ENCODE measurements at regions of chr14 and their contacts with region 1.

Region 1: GRCh38 chr14:32576088-32576795 is 247.1 kb downstream of the AKAP6 start:
- DNase-seq: peak; percentile 35
- H3K4me3 Mint-ChIP-seq: no peak overlapping the region
- H3K27ac Mint-ChIP-seq: no peak overlapping the region
- H3K4me1 Mint-ChIP-seq: no peaks in the 10 kb centered on the region
- H3K27me3 Mint-ChIP-seq: no peaks in the 10 kb centered on the region

Region 2: GRCh38 chr14:32560209-32560857 is 15.9 kb before region 1 on chr14:
- CTCF ChIA-PET with region 1: interaction called, 11 read pairs
- POLR2A ChIA-PET with region 1: no interaction called
- intact Hi-C with region 1: no loop called
- DNase-seq: peak; percentile 40
- H3K4me3 Mint-ChIP-seq: no peak overlapping the region
- H3K27ac Mint-ChIP-seq: no peak overlapping the region
- H3K4me1 Mint-ChIP-seq: peaks cover 12% of the 10 kb centered on the region
- H3K27me3 Mint-ChIP-seq: no peaks in the 10 kb centered on the region

Region 3: DNA sequence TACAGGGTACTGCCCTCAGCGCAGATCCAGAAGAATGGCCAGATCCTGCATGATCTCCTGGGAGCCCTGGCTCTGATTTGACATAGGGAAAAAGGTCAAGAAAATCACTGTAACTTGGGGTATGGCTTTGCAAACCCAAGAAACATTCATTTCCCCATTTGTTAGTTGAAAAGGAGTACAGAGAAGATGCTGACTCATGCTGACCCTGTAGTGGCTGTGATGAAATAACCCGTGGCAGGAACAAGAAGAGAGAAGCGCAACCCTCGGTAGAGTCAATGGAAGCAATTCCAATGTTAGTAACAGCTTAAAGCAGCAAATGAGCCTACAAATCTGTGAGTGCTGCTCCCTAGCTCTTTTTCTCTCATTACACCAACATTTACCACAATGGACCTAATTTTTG is 80.8 kb after region 1 on chr14:
- CTCF ChIA-PET with region 1: no interaction called
- POLR2A ChIA-PET with region 1: no interaction called
- intact Hi-C with region 1: no loop called
- DNase-seq: no peak
- H3K4me3 Mint-ChIP-seq: no peak overlapping the region
- H3K27ac Mint-ChIP-seq: no peak overlapping the region
- H3K4me1 Mint-ChIP-seq: no peaks in the 10 kb centered on the region
- H3K27me3 Mint-ChIP-seq: no peaks in the 10 kb centered on the region

Region 4: DNA sequence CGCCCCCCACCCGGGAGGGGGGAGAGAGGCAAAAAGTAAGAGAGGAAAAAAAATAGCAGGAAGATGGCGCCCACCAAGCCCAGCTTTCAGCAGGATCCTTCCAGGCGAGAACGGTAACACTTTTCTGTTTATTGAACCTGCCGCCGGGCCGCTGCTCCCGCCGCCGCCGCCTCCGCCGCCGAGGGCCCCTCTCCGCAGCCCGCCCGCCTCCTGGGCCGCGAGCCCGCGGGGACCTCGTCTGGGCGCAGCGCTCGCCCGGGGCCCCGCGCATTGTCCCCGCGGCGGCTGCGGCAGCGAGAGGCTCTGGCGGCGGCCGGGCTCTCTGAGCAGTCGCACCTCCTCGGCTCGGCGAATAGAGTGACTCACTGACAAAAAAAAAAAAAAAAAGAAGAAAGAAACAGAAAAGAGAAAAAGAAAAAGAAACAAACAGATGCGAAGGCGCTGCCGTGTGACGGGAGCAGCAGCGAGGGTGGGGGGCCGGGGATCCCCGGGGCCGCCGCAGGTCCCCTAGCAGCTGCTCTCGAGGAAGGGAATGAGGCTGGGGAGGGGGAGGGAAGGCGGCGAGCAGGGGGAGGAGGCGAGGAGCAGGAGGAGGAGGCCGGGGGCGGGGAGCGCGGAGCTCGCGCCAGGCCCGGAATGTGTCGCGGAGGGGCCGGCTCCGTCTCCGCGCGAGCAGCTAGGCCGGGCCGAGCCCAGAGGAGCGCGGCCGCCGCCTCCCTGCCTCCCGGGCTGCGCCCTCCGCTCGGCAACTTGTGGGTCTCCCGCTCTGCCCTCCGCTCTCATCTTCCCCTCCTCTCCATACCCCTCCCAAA is 363.2 kb after region 1 on chr14:
- CTCF ChIA-PET with region 1: no interaction called
- POLR2A ChIA-PET with region 1: no interaction called
- intact Hi-C with region 1: loop called (anchors 10 kb)
- DNase-seq: peak; percentile 39
- H3K4me3 Mint-ChIP-seq: peak overlapping the region; percentile 71
- H3K27ac Mint-ChIP-seq: no peak overlapping the region
- H3K4me1 Mint-ChIP-seq: peaks cover 10% of the 10 kb centered on the region
- H3K27me3 Mint-ChIP-seq: peaks cover 55% of the 10 kb centered on the region

Region 5: DNA sequence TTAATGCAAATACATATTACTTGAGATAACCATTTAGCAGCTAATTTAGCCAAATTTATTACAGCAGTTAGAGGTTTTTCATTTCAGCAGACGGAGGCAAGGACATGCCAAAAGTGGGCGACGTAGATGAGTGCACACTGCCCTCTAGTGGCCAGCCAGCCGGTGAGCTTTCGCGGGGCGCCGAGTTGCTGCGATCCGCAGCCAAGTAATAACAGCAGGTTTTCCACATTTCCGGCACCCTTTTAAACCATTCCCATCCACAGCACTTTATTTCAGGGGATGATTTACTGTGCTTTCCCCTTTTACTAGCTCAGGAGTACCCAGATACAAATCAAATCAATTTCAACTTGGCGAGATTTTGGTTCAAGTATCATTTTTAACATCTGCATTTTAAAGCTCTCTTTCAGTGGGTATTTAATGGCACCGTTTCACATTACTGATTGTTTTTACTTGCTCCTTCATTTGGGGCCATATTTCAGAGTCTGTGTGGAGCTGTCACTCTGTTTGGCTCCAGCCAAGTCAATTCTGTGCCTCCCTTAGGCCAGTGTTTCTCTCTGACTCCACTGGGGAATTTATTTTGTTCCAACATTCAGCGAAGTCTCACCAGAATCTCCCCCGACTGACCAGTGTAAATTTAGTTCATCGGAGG is 1216.6 kb after region 1 on chr14:
- CTCF ChIA-PET with region 1: interaction called, 33 read pairs
- POLR2A ChIA-PET with region 1: no interaction called
- intact Hi-C with region 1: loop called (anchors 1 kb)
- DNase-seq: peak; percentile 77
- H3K4me3 Mint-ChIP-seq: peak overlapping the region; percentile 36
- H3K27ac Mint-ChIP-seq: no peak overlapping the region
- H3K4me1 Mint-ChIP-seq: peaks cover 17% of the 10 kb centered on the region
- H3K27me3 Mint-ChIP-seq: peaks cover 28% of the 10 kb centered on the region

Region 6: DNA sequence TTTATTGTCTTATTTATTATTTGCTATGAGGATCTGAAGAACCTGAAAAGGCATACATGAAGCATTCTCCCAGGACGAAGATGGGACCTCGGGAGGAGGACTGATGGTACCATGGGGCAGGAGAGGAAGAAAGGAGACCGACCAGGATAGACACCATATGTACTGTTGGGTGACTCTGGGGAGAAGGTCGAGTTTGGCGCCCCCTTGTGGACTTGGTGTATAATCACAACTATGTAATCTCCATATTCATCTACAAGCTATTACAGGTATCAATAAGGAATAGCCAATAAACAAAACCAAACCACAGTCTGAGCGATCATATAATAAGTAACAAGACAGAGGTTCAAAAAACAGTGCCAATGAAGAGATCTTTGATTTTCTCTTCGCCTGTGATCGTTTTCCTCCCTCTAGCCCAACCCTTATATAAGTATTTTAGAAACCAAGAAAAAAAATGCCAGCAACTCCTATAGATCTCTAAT is 1746.7 kb after region 1 on chr14:
- CTCF ChIA-PET with region 1: interaction called, 3 read pairs
- POLR2A ChIA-PET with region 1: no interaction called
- intact Hi-C with region 1: loop called (anchors 5 kb)
- DNase-seq: peak; percentile 80
- H3K4me3 Mint-ChIP-seq: no peak overlapping the region
- H3K27ac Mint-ChIP-seq: no peak overlapping the region
- H3K4me1 Mint-ChIP-seq: no peaks in the 10 kb centered on the region
- H3K27me3 Mint-ChIP-seq: peaks cover 1% of the 10 kb centered on the region

Measured in activated CD4-positive, alpha-beta memory T cell treated with anti-CD3 and anti-CD28 coated beads for 36 hours (primary cell).